BJ (cell line): ENCODE measurements at regions of chr20 and their contacts with region 1.

Region 1: DNA sequence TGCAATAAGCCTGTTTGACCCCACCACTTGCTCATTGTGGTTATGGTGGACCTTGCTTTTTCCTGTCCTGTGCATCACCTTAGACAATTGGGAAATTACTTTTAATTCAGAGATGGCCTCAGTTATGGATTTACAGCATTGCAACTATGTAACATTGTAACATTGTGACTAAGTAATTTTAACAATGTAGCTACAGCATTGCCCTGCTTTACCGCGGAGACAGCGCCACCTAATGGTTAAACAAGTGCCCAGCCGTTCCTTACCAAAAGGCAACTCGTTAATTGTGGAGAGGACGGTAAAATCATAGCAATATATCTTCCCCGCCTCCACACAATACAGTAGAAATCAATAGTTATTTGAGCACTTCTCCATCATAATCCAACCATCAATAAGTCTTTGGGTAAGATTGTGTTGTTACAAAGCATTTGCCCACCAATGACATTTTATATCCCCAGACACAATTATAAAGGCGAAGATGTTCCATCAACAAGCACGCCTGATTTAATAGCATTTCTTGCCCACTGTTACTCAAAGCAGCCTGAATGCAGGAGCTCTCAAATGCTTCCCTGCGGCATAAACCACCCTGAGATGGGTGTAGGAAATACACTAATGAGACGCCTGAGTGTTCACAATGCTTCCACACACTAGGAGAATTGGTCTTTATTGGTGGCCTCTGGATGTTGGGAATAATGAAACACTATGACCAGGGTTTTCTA is 93.7 kb downstream of the PROKR2 start:
- DNase-seq: peak; percentile 13
- H3K4me3 ChIP-seq: no peak overlapping the region
- H3K27me3 ChIP-seq: no peaks in the 10 kb centered on the region
- CTCF ChIP-seq: peak; percentile 95

Region 2: GRCh38 chr20:5126512-5127203 is 96.4 kb before region 1 on chr20 and contains the start of gene CDS2:
- CTCF ChIA-PET with region 1: interaction called, 11 read pairs
- POLR2A ChIA-PET with region 1: no interaction called
- DNase-seq: peak; percentile 92
- H3K4me3 ChIP-seq: peak within 1 kb of the TSS; percentile 90
- H3K27me3 ChIP-seq: no peaks in the 10 kb centered on the region
- CTCF ChIP-seq: peak; percentile 72
- polyA plus RNA-seq, gene CDS2: 25.2 and 46.3 TPM in 2 replicates

Region 3: GRCh38 chr20:5141615-5142014 is 81.5 kb before region 1 on chr20:
- CTCF ChIA-PET with region 1: no interaction called
- POLR2A ChIA-PET with region 1: no interaction called
- DNase-seq: no peak
- H3K4me3 ChIP-seq: no peak overlapping the region
- H3K27me3 ChIP-seq: no peaks in the 10 kb centered on the region
- CTCF ChIP-seq: no peak

Region 4: DNA sequence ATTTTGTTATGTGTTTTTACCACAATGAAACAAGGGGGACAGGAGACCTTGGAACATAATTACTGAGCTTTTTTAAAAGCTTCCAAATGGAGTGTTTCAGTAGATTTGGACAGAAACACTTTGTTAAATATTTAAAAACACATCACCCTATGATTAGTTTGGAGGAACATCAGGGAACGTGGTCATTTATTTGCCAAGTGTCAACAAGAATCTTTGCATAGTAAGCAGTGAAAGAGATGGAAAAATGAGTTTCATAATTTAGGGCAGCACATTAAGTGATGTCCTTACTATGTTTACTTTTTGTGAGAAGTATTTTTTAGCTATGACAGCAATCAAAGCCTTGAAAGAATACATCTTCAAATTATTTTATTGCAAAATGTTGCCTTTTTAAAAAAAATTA is 11.1 kb after region 1 on chr20:
- CTCF ChIA-PET with region 1: interaction called, 14 read pairs
- POLR2A ChIA-PET with region 1: no interaction called
- DNase-seq: no peak
- H3K4me3 ChIP-seq: no peak overlapping the region
- H3K27me3 ChIP-seq: no peaks in the 10 kb centered on the region
- CTCF ChIP-seq: no peak